ENCODE measurements at regions of chr14 and their contacts with region 1.

Region 1: GRCh38 chr14:25049568-25050268 is at the start of gene STXBP6:
- DNase-seq: no peak
- H3K4me3 ChIP-seq: peak within 1 kb of the TSS; percentile 80 to 91 (median 86)
- H3K27ac ChIP-seq: peak within 1 kb of the TSS; percentile 83 to 93 (median 90)
- H3K4me1 ChIP-seq: peaks cover 38 to 50% (median 44%) of the 10 kb centered on the region in 4 donors
- H3K27me3 ChIP-seq: peaks cover 0 to 7% (median 0%) of the 10 kb centered on the region in 4 donors
- CTCF ChIP-seq: peak in 1 of 3 experiments; percentile 16
- EP300 ChIP-seq: no peak
- POLR2A ChIP-seq: no peak
- total RNA-seq, gene STXBP6: 36.9 to 60.4 (median 52.1) TPM

Region 2: GRCh38 chr14:24789378-24789884 is 260.3 kb before region 1 on chr14:
- intact Hi-C with region 1: no loop called
- DNase-seq: no peak
- H3K4me3 ChIP-seq: no peak overlapping the region
- H3K27ac ChIP-seq: peak overlapping the region; percentile 3 to 73 (median 42)
- H3K4me1 ChIP-seq: peaks cover 13 to 37% (median 34%) of the 10 kb centered on the region in 4 donors
- H3K27me3 ChIP-seq: no peaks in the 10 kb centered on the region
- CTCF ChIP-seq: no peak
- EP300 ChIP-seq: no peak
- POLR2A ChIP-seq: no peak

Region 3: DNA sequence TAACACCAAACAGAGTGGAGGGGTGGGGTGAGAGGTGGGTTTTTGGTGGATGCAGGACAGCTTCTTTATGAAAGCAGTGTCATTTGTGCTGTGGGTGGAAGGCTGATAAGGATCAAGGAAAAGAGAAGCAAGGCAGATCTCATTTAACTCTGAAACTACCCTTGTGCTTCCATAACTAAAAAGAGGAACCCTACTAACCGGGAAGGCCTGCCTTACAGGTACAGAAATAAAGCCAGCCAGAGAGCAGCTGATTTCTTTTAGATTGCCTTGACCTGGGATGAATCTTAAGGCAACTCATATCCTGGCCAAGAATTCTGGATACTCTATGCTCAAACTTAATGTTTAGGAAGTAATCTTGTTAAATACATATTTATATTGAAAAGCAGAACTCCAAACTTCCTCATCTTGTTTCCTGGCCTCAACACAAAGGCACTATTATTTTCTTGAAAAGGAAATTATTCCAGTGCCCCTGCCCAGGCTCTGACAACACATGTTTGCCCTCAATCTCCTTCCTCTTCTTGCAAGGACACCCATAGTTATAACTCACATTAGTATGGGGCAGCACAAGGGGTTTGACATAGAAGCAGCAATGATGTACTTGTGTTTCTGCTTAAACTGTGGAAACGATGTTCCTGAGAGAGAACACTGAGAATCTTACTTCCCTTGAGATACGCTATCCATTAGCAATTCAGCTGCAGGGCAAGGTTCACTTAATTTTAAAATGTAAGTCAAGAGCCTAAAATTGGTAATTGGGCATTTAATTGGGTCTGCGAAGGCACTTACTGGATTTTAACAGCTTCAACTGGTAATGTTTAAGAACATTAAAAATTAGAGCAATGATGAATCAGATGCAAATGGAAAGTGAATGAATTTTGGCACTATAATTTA is 173.5 kb before region 1 on chr14:
- intact Hi-C with region 1: no loop called
- DNase-seq: no peak
- H3K4me3 ChIP-seq: no peak overlapping the region
- H3K27ac ChIP-seq: no peak overlapping the region
- H3K4me1 ChIP-seq: peaks cover 43 to 59% (median 57%) of the 10 kb centered on the region in 4 donors
- H3K27me3 ChIP-seq: no peaks in the 10 kb centered on the region
- CTCF ChIP-seq: no peak
- EP300 ChIP-seq: no peak
- POLR2A ChIP-seq: no peak

Region 4: GRCh38 chr14:24978862-24979724 is 70.6 kb before region 1 on chr14:
- intact Hi-C with region 1: loop called (anchors 5 kb)
- DNase-seq: no peak
- H3K4me3 ChIP-seq: no peak overlapping the region
- H3K27ac ChIP-seq: no peak overlapping the region
- H3K4me1 ChIP-seq: peaks cover 13 to 42% (median 32%) of the 10 kb centered on the region in 4 donors
- H3K27me3 ChIP-seq: no peaks in the 10 kb centered on the region
- CTCF ChIP-seq: no peak
- EP300 ChIP-seq: no peak
- POLR2A ChIP-seq: no peak

Region 5: DNA sequence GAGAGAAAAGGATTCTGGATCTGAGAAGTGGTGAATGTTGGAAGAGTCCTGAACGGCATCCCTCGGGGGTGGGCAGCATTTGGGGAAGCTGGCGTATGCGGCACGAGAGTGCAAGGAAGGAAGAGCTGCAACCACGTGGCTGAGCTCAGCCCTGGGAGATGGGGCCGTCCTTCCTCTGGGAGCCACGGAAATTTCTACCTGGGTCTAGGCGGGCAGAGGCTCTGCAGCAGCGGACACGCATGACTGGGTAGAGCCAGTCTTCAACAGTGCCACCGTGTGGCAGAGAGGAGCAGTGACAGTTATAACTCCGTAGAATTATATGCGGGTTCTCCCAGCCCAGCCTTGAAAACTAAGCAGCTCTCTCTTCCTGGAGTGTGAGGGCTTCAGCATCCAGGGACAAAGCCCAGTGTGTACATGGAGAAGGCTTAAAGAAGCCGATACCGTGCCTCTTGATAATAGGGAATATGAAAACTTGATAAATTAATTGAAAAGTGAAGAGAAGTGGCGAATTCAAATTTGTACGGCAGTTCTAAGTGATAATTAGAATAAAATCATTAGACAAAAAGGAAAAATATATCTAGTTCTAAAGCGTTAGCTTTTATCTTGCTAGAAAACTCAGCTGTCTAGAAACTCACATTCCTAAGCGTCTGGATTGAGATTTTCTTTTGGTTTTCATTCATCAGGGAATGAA is 83.2 kb after region 1 on chr14:
- intact Hi-C with region 1: loop called (anchors 5 kb)
- DNase-seq: no peak
- H3K4me3 ChIP-seq: peak overlapping the region in 1 of 4 donors; percentile 23
- H3K27ac ChIP-seq: no peak overlapping the region
- H3K4me1 ChIP-seq: peaks cover 7 to 10% (median 8%) of the 10 kb centered on the region in 4 donors
- H3K27me3 ChIP-seq: peaks cover 0 to 22% (median 0%) of the 10 kb centered on the region in 4 donors
- CTCF ChIP-seq: peak; percentile 85 to 92 (median 90)
- EP300 ChIP-seq: no peak
- POLR2A ChIP-seq: no peak

Region 6: DNA sequence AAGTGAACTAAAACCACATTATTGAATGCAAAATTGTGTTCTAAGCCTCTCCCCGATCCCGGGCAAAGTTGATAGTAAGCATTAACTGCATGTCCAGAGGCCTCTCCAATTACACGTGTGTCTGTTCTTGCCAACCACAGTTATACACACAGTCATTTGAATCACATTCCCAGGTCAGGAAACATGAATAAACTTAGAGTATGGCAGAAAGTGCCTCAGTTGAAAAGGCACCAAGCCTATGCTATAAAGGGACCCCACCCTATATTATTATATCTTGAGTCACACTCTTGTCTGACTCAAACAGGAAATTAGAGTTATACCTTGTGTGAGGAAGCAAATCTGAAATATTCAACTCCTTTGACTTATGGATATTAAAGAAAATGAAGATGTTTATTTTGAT is 128.5 kb after region 1 on chr14:
- intact Hi-C with region 1: no loop called
- DNase-seq: no peak
- H3K4me3 ChIP-seq: no peak overlapping the region
- H3K27ac ChIP-seq: no peak overlapping the region
- H3K4me1 ChIP-seq: no peaks in the 10 kb centered on the region
- H3K27me3 ChIP-seq: no peaks in the 10 kb centered on the region
- CTCF ChIP-seq: no peak
- EP300 ChIP-seq: no peak
- POLR2A ChIP-seq: no peak

Measured in esophagus muscularis mucosa (tissue), 4 donors.